ENCODE measurements at regions of chr17 and their contacts with region 1.

Region 1: DNA sequence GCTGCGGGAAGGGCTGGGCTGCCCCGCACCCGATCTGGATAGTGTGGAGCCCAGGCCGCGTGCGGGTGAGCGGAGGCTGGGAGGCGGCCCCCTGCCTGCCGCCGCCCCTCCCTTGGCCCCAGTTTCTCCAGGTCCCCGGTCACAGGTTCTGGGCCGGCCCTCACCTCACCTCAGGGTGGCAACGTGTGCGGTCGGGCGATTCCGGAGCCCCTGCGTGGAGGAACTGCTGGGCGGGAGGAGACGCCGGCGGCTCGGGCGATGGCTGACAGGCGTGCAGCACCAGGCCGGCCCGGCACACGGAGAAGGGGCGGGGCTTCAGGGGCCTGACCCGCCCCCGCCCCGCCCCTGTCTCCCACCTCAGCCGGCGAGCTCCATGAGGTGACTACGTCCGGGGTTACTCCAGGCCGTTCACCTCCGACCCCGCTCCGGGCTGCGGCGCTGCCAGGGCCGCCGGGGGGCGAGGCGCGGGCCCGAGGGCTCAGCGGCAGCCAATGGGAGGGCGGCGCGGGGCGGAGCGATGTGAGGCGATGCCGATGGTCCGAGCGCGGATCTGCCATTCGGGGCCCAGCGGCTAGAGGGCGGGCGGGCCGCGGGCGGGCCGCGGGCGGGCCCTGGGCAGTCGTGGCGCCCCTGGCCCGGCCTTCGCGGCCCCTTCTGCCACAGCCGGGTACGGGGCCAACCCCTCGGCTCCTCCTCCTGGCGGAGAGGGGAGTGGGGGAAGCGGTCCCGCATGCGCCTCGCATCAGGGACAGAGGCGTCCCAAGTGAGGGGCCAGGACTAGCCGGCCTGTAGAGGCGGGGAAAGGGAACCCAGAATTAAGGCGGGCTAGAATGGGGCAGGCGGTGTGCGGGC is 16.7 kb upstream of the C17orf78 start:
- DNase-seq: peak; percentile 86 to 99 (median 92)

Region 2: GRCh38 chr17:37259030-37259735 is 99.9 kb before region 1 on chr17:
- intact Hi-C with region 1: loop called (anchors 10 kb)
- DNase-seq: no peak

Region 3: GRCh38 chr17:37392024-37392590 is 33.1 kb after region 1 on chr17:
- intact Hi-C with region 1: no loop called
- DNase-seq: no peak

Region 4: GRCh38 chr17:37406635-37407461 is 47.8 kb after region 1 on chr17 and contains the starts of genes ACACA and TADA2A:
- intact Hi-C with region 1: loop called (anchors 5 kb)
- DNase-seq: peak; percentile 49 to 95 (median 61)

Region 5: DNA sequence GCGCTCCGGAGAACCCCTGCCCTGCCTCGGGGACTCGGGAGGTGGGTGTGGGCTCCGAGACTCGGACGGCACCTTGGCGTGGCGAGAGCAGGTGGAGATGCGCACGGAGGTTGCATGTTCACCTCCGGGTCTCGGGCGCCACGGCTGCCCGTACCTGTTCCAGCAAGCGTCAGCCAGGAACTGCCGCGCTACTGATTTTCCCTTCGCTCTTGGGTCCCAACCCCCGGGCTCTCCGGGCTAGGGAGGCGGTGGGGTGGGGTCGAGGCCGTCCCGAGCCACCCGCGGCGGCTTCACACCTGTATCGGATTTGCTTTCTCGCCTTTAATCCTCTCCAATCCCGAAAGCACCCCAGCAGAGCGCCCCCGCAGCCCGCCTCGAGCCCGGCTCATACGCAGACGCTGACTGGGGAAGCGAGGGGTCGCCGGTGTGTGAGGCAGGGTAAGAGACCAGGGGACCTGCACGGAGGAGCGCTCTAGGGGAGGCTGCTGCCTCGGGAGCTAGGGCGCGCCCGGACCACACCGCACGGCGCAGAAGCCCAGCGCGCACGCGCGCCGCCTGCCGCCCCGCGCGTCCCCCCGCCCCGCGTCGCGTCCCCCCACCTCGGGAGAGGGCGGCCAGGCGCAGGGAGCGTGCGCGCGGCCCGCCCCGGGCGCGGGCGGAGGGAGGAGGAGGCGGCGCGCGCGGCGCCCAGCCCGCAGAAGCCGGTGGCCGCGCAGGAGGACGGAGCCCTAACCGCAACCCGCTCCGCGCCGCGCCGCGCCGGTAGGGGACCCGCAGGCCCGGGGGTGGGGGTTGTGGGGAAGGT is 130.3 kb after region 1 on chr17 and contains the start of gene DUSP14:
- intact Hi-C with region 1: loop called (anchors 10 kb)
- DNase-seq: peak; percentile 63 to 97 (median 80)

Measured in posterior cingulate gyrus (tissue), 11 donors.